Psoas muscle (tissue), 8 donors: ENCODE measurements at regions of chr21 and their contacts with region 1.

Region 1: DNA sequence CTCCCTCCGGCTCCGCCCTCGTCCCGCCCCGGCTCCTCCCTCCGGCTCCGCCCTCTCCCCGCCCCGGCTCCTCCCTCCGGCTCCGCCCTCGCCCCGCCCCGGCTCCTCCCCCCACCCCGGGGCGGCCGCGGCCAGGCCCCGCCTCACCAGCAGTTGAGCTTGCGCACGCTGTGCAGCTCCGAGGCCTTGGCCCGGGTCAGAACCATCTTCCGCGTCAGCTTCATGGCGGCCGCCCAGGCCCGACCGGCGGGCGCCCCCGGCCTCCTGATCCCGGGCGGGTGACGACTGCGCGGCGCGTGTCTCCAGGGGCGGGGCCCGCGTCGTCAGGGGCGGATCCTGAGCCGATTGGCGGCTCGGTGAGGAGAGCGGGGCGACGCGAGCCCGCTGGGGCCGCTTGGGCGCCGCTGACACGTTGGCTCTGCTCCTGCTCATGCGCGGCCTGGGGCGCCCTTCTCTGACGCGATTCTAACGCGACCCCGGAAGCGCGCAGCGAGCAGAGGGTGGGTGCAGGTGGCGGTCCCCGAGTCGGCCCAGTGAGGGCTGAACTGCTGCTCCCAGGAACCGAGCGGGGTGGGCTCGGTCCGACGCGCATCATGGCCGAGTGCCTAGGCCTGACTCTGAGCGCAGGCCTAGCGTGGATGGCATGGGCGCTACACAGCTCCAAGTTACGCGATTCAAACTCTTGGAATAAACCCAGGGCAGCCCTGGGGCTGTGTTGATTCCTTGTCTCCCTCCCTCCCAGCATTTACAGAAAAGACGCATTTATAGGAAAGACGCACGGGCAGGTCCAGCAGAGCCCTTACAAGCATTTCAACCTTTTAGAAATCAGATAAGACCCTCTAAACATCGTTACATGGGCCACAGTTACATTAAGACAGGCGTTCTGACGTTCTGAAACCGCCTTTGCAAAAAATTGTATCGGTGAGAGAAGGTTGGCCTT is at the start of gene CFAP410:
- DNase-seq: peak; percentile 96 to 98
- ATAC-seq: peak; percentile 93 to 96 (median 95)
- H3K4me3 ChIP-seq: peak within 1 kb of the TSS; percentile 99
- H3K27ac ChIP-seq: peak within 1 kb of the TSS; percentile 98
- H3K4me1 ChIP-seq: peaks cover 14% of the 10 kb centered on the region
- H3K27me3 ChIP-seq: no peaks in the 10 kb centered on the region
- CTCF ChIP-seq: no peak
- total RNA-seq, gene CFAP410: 8.3 to 10.5 (median 9.7) TPM

Region 2: DNA sequence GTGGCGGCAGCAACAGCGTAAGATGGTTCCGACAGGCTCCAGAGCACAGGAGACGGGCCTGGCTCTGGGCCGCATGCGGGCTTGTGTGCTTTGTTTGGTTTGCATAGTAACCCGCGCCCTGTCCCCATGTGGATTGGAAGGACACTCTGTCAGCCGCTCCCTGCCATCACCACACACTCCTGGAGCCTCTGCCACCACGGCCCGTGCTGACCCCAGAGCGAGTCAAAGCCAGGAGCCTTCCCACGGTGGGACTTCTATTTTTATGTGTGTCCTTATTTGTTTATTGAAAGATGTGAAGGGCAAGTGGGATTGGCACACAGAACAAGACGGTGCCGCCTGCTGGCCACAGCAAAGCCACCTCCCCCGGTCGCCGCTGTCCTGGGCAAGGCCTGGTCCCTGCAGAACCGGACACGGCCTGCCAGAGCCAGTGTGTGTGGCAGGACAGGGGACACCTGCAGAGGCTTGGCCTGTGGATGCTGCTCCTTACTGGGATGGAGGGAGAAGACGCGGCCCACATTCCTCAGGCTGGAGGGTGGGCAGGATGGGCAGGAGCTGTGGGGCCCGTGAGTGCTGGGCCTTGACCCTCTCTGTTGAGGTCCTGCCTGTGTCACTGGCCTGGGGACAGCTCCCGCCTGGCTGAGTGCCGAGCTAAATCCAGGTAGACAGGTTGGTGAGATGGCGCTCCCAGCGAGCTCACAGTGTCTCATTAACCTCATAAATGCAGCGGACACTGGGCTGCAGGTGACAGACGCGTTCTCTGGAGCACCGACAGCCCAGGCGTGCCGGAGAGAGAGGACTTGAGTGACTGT is 409.8 kb before region 1 on chr21:
- intact Hi-C with region 1: no loop called
- DNase-seq: peak; percentile 67 to 93
- ATAC-seq: peak; percentile 68 to 80 (median 74)
- H3K4me3 ChIP-seq: no peak overlapping the region
- H3K27ac ChIP-seq: peak overlapping the region; percentile 88
- H3K4me1 ChIP-seq: peaks cover 52% of the 10 kb centered on the region
- H3K27me3 ChIP-seq: no peaks in the 10 kb centered on the region
- CTCF ChIP-seq: peak; percentile 39

Region 3: GRCh38 chr21:44299458-44300261 is 39.6 kb before region 1 on chr21 and contains the start of gene PFKL:
- intact Hi-C with region 1: loop called in 1 of 2 experiments (anchors 5 kb)
- DNase-seq: peak; percentile 71 to 79
- ATAC-seq: peak; percentile 35 to 67 (median 56)
- H3K4me3 ChIP-seq: peak within 1 kb of the TSS; percentile 76
- H3K27ac ChIP-seq: peak within 1 kb of the TSS; percentile 76
- H3K4me1 ChIP-seq: peaks cover 32% of the 10 kb centered on the region
- H3K27me3 ChIP-seq: peaks cover 0 to 13% (median 4%) of the 10 kb centered on the region in 3 donors
- CTCF ChIP-seq: no peak
- total RNA-seq, gene PFKL: 17.8 to 33.6 (median 27.7) TPM

Region 4: DNA sequence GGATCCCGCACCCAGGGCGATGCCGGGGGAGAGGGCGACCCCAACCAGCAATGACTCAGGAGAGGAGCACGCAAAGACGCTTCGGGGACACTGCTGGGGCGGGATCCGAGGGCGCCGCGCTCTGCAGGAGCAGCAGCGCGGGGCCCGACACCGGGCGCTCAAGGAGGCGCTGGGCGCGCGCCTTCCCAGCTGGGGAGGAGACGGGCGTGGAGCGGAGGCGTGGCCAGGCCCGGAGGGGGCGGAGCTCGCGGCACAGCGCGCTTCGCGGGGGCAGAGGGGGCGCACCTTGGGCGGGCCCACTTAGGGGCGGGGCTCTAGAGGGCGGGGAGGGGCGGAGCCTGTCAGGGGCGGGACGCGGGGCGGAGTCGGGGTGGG is 478.3 kb after region 1 on chr21:
- intact Hi-C with region 1: loop called in 1 of 2 experiments (anchors 5 kb)
- DNase-seq: peak; percentile 91 to 97
- ATAC-seq: peak; percentile 92 to 96 (median 94)
- H3K4me3 ChIP-seq: peak overlapping the region; percentile 92
- H3K27ac ChIP-seq: peak overlapping the region; percentile 92
- H3K4me1 ChIP-seq: peaks cover 13% of the 10 kb centered on the region
- H3K27me3 ChIP-seq: no peaks in the 10 kb centered on the region
- CTCF ChIP-seq: no peak

Region 5: DNA sequence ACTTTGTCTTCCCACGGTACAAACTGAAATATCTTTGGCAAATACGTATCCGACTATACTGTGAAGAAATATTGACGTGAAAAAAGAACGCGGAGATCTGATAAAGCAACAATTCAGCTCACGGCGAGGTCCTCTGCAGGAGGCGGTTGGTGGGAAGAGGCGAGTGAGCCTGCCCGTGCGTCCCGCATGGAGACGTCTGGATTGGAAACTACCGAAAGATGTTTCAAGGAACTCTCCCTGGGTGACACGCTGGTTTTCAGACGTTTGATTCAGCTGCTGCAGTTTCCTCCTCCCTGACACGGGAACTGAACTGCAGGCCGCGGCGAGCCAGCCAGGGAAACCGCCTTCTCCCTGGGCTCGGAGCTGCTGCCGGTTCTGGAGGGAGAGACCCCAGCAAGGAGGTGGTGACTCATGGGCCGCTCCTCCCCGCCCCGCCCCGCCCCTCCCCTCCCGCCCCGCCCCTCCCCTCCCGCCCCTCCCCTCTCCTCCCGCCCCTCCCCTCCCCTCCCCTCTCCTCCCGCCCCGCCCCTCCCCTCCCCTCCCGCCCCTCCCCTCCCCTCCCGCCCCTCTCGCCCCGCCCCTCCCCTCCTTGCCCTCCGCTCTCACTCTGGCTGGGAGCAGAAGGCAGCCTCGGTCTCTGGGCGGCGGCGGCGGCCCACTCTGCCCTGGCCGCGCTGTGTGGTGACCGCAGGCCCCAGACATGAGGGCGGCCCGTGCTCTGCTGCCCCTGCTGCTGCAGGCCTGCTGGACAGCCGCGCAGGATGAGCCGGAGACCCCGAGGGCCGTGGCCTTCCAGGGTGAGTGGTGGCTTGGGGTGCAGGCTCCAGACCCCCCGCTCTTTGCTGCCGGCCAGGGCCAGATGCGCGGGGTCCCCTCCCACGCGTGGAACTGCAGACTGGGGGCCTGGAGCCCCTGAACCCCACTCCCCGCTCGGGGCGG is 1642.2 kb after region 1 on chr21 and contains the start of gene COL6A1:
- intact Hi-C with region 1: loop called in 1 of 2 experiments (anchors 10 kb)
- DNase-seq: peak; percentile 84 to 92
- ATAC-seq: peak; percentile 72 to 82 (median 74)
- H3K4me3 ChIP-seq: peak within 1 kb of the TSS; percentile 93
- H3K27ac ChIP-seq: peak within 1 kb of the TSS; percentile 66
- H3K4me1 ChIP-seq: no peaks in the 10 kb centered on the region
- H3K27me3 ChIP-seq: no peaks in the 10 kb centered on the region
- CTCF ChIP-seq: no peak
- total RNA-seq, gene COL6A1: 36.1 to 83.0 (median 61.9) TPM